Activated CD4-positive, alpha-beta T cell treated with anti-CD3 and anti-CD28 coated beads, Interleukin-2, amount 10 ng/mL, durations not matched to agents 24 days and 14 days (primary cell): ENCODE measurements at regions of chr5 and their contacts with region 1.

Region 1: DNA sequence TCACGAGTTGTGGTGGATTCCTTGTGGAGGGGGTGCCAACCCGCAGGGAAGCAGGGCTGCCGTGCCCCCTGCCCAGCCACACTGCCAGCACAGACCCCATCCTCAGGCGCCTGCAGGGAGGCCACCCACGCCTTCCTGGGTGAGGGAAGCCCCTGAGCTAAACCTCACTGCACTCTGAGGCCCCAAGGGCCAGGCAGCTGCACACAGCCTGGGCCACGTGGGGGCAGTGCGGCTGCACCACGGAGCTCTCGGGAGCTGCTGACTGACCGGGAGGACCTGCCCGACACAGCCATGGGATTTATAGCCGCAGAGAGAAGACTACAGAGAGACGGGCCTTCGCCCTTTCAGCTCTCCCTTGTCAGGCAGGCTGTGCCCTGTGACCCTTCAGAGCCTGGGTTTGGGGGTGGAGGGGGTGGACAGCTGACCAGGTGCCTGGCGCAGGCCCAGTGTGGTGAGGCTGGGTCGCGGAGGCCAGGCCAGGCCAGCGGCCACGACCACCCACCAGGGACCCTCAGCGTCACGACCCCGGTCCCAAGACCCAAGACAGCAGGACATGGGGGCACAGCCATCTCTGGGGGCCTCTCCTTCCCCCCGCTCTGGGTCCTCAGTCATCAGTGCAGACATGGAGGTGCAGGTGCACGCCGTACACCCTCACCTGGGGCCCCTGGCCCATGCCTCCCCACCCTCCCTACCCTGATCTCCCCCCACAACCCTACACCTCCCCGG is 4.3 kb upstream of the AHRR start:
- DNase-seq: peak; percentile 80
- H3K4me3 Mint-ChIP-seq: no peak overlapping the region
- H3K27ac Mint-ChIP-seq: no peak overlapping the region
- H3K4me1 Mint-ChIP-seq: peaks cover 4% of the 10 kb centered on the region
- H3K27me3 Mint-ChIP-seq: peaks cover 11% of the 10 kb centered on the region

Region 2: DNA sequence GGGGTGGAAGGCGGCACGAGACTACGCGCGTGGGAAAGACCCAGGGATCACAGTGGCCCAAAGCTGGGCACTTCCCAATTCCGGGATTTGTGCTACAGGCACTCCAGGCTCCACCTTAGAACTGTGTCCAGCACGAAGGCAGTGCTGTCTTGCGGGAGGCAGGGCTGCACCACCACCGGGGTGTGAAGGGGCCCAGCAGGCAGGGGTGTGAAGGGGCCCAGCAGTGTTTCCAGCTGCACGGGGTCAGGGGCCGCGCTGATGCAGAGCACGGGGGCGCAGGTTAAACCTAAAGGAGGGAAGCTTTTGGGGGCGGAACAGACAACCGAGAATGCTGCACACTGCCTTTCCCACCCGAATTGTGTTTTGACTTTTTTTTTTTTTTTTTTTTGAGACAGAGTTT is 46.9 kb before region 1 on chr5:
- intact Hi-C with region 1: loop called (anchors 5 kb)
- DNase-seq: no peak
- H3K4me3 Mint-ChIP-seq: peak overlapping the region; percentile 86
- H3K27ac Mint-ChIP-seq: peak overlapping the region; percentile 78
- H3K4me1 Mint-ChIP-seq: peaks cover 35% of the 10 kb centered on the region
- H3K27me3 Mint-ChIP-seq: no peaks in the 10 kb centered on the region

Region 3: GRCh38 chr5:1208743-1209506 is 891.7 kb after region 1 on chr5:
- intact Hi-C with region 1: no loop called
- DNase-seq: no peak
- H3K4me3 Mint-ChIP-seq: no peak overlapping the region
- H3K27ac Mint-ChIP-seq: no peak overlapping the region
- H3K4me1 Mint-ChIP-seq: no peaks in the 10 kb centered on the region
- H3K27me3 Mint-ChIP-seq: no peaks in the 10 kb centered on the region